HCT116 (cell line): ENCODE measurements at regions of chr17 and their contacts with region 1.

Region 1: DNA sequence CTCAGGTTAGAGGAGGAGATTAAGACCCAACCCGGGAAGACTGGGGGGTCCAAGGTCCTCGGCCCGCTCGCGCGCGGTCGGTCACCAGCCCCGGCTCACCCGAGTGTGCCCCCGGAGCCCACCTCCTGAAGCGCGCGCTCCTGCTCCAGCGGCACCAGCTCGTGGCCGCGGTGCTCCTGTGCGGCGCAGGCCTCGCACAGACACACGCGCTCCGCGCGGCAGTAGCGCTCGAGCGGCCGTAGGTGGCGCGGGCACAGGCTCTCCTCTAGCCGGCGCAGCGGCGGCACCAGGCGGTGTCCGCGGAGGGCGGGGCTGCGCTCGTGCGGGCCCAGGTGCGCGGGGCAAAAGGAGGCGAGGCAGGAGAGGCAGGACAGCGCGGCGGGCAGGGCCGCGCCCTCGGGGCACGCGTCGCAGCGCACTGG is 618 bp downstream of the TRIM47 start:
- DNase-seq: no peak
- ATAC-seq: peak; percentile 49
- H3K4me3 ChIP-seq: peak overlapping the region; percentile 69 to 81
- H3K27ac ChIP-seq: peak overlapping the region; percentile 99
- H3K4me1 ChIP-seq: peaks cover 44 to 62% of the 10 kb centered on the region in 2 experiments
- H3K27me3 ChIP-seq: no peaks in the 10 kb centered on the region
- CTCF ChIP-seq: peak in 2 of 3 experiments; percentile 37 to 49; a peak in 3 of 6 replicates
- POLR2A ChIP-seq: peak; percentile 13
- RAD21 ChIP-seq: no peak

Region 2: DNA sequence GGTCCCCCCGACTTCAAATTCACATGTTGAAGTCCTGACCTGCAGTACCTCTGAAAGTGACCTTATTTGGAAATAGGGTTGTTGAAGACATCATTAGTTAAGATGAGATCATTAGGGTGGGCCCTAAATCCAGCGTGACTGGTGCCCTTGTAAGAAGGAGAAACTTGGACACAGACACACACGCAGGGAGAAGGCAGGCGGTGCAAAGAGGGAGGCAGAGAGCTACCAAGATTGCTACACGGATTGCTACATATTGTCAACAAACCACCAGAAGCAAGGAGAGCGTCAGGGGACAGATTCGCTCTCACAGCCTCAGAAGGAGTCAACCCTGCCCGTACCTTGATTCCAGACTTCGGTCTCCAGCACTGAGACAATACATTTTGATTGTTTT is 15.8 kb before region 1 on chr17:
- CTCF ChIA-PET with region 1: interaction called, 52 read pairs
- POLR2A ChIA-PET with region 1: interaction called, 7 read pairs
- RAD21 ChIA-PET with region 1: interaction called in 1 of 2 experiments, 5 read pairs
- intact Hi-C with region 1: no loop called
- DNase-seq: no peak
- ATAC-seq: no peak
- H3K4me3 ChIP-seq: no peak overlapping the region
- H3K27ac ChIP-seq: no peak overlapping the region; the same call in 1 of the 2 replicates
- H3K4me1 ChIP-seq: peaks cover 20 to 36% of the 10 kb centered on the region in 2 experiments; a peak in 3 of 4 replicates
- H3K27me3 ChIP-seq: no peaks in the 10 kb centered on the region
- CTCF ChIP-seq: no peak
- POLR2A ChIP-seq: no peak
- RAD21 ChIP-seq: no peak

Region 3: DNA sequence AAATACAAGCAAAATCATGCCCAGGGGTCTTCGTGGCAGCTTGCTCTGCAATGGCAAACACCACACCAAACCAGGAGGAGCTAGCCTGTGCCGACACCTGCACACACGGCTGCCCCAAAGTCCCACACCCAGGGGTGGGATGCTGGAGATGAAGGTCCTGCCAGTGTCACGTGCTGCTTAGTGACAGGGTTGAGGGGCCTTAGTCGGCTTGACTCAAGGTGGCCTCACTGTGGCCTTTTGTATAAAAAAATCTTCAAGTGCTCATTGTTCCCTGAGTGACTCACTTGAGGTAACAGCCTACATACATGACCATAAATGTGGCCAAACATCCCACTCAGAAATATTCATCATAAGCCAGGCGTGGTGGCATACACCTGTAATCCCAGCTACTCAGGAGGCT is 11.7 kb after region 1 on chr17:
- CTCF ChIA-PET with region 1: interaction called, 5 read pairs
- POLR2A ChIA-PET with region 1: interaction called, 22 read pairs
- RAD21 ChIA-PET with region 1: interaction called in 1 of 2 experiments, 3 read pairs
- intact Hi-C with region 1: no loop called
- DNase-seq: no peak
- ATAC-seq: peak; percentile 63
- H3K4me3 ChIP-seq: no peak overlapping the region
- H3K27ac ChIP-seq: no peak overlapping the region
- H3K4me1 ChIP-seq: peaks cover 7 to 20% of the 10 kb centered on the region in 2 experiments
- H3K27me3 ChIP-seq: no peaks in the 10 kb centered on the region
- CTCF ChIP-seq: no peak
- POLR2A ChIP-seq: no peak
- RAD21 ChIP-seq: no peak

Region 4: GRCh38 chr17:75896415-75897159 is 18.8 kb after region 1 on chr17 and contains the start of gene TRIM65:
- CTCF ChIA-PET with region 1: interaction called, 8 read pairs
- POLR2A ChIA-PET with region 1: interaction called, 22 read pairs
- RAD21 ChIA-PET with region 1: interaction called in 1 of 2 experiments, 4 read pairs
- intact Hi-C with region 1: no loop called
- DNase-seq: no peak
- ATAC-seq: peak; percentile 79
- H3K4me3 ChIP-seq: peak within 1 kb of the TSS; percentile 64 to 72
- H3K27ac ChIP-seq: peak within 1 kb of the TSS; percentile 100
- H3K4me1 ChIP-seq: peaks cover 13 to 26% of the 10 kb centered on the region in 2 experiments
- H3K27me3 ChIP-seq: no peaks in the 10 kb centered on the region
- CTCF ChIP-seq: peak in 1 of 3 experiments; percentile 0; a peak in 1 of 6 replicates
- POLR2A ChIP-seq: peak; percentile 88
- RAD21 ChIP-seq: no peak; the same call in 1 of the 2 replicates
- total RNA-seq, gene TRIM65: 53.0 TPM